Testis (tissue), 5 donors: ENCODE measurements at regions of chr20 and their contacts with region 1.

Region 1: GRCh38 chr20:57654363-57654997 is 34.3 kb upstream of the ZBP1 start:
- DNase-seq: peak; percentile 59
- H3K4me3 ChIP-seq: no peak overlapping the region
- H3K27ac ChIP-seq: no peak overlapping the region
- H3K4me1 ChIP-seq: no peaks in the 10 kb centered on the region
- H3K27me3 ChIP-seq: no peaks in the 10 kb centered on the region
- CTCF ChIP-seq: peak; percentile 80 to 88 (median 84)
- POLR2A ChIP-seq: no peak

Region 2: GRCh38 chr20:58087193-58087858 is 432.8 kb after region 1 on chr20:
- intact Hi-C with region 1: loop called (anchors 10 kb)
- DNase-seq: peak; percentile 48
- H3K4me3 ChIP-seq: no peak overlapping the region
- H3K27ac ChIP-seq: no peak overlapping the region
- H3K4me1 ChIP-seq: no peaks in the 10 kb centered on the region
- H3K27me3 ChIP-seq: no peaks in the 10 kb centered on the region
- CTCF ChIP-seq: peak; percentile 39 to 84 (median 81)
- POLR2A ChIP-seq: no peak

Region 3: DNA sequence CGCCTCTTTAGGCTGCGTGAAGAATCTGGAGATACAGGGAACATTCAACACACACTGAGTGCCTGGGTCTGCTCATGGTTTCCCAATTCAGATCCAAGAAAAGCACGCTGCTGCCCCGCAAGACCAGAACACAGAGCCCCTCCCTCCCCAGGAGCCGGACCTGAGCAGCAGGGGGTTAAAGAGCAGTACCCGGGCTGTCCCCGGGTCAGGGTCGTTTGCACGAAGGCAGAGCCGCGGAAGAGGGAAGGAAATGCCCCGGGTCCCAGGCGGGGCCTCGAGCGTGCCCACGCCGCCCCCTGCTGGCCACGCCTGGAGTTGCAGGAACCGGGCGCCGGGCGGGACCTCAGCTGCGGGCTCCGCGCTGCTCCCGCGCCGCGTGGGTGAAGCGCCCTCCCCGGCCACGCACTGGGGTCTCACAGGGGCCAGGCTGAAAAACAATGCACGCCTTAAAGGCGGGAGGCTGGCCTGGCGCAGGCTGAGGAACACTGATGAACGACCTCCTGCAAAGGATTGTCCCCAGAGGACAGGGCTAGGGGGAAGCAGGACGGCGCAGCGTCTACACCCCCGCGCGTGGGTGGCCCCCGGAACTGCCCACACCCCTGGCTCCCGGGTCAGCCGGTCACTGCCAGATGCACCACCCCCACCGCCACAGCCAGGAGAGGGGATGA is 525.1 kb after region 1 on chr20:
- intact Hi-C with region 1: loop called (anchors 5 kb)
- DNase-seq: peak; percentile 68
- H3K4me3 ChIP-seq: peak overlapping the region; percentile 25 to 53
- H3K27ac ChIP-seq: no peak overlapping the region
- H3K4me1 ChIP-seq: peaks cover 10% of the 10 kb centered on the region
- H3K27me3 ChIP-seq: no peaks in the 10 kb centered on the region
- CTCF ChIP-seq: peak; percentile 96 to 100 (median 97)
- POLR2A ChIP-seq: no peak